ENCODE measurements at regions of chr6 and their contacts with region 1.

Region 1: DNA sequence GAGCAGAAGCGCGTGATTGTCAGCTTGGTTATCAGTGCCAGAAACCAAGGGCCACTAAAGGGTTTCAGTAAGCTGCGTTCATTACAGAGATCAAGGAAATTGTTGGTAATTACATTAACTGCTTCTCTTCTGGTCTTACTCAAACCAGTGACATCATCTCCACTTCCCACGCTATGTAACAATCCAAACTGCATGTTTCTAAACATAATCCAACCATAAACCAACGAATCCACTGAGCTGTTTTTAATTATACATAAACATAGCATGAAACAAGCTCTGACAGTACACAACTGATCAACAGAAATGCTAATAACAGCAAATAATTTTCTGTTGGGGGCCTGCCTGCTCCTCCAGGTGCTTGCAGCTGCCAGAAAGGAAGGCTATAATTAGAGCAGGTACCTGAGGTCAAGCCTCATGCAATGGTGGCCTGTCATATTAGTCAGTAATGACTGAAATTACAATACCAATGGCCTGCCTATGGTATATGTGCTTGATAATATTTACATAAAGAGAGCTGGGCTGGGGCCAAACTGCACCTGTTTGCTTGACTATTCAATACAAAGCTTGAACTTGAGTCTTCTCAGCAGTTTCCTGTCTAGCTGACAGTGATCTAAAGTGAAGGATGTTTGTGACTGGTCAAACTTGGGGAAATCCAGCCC is 40.1 kb downstream of the ILRUN start:
- DNase-seq: peak in 1 of 2 experiments; percentile 68
- H3K4me3 ChIP-seq: peak overlapping the region; percentile 54; the same call in 1 of the 2 replicates
- H3K27ac ChIP-seq: peak overlapping the region; percentile 96
- H3K4me1 ChIP-seq: peaks cover 54% of the 10 kb centered on the region
- H3K27me3 ChIP-seq: no peaks in the 10 kb centered on the region
- CTCF ChIP-seq: no peak

Region 2: GRCh38 chr6:34638834-34639736 is 17.4 kb before region 1 on chr6:
- CTCF ChIA-PET with region 1: no interaction called
- POLR2A ChIA-PET with region 1: interaction called, 10 read pairs
- intact Hi-C with region 1: no loop called
- DNase-seq: no peak
- H3K4me3 ChIP-seq: no peak overlapping the region
- H3K27ac ChIP-seq: no peak overlapping the region
- H3K4me1 ChIP-seq: no peaks in the 10 kb centered on the region
- H3K27me3 ChIP-seq: no peaks in the 10 kb centered on the region
- CTCF ChIP-seq: no peak

Region 3: DNA sequence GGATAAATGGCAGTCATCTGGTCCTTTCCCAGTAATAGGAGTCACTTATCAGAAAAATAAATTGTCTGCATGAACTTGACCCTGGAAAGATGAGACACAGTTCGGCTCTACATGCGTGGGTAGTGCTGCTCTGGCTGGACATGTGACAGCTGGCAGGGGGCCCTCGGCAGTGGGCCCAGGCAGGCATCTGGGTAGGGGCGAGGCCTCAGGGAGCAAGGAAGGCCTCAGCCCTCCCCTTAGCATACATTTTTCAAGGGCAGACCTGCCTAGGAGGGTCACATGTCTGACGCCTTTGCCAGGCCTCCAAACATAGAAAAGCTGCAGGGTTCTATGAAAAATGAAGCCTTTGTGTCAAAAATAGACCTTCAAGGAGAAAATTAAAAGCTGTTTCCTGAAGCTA is 52.9 kb after region 1 on chr6:
- CTCF ChIA-PET with region 1: no interaction called
- POLR2A ChIA-PET with region 1: no interaction called
- intact Hi-C with region 1: loop called (anchors 2 kb)
- DNase-seq: no peak
- H3K4me3 ChIP-seq: no peak overlapping the region
- H3K27ac ChIP-seq: no peak overlapping the region
- H3K4me1 ChIP-seq: peaks cover 5% of the 10 kb centered on the region; the same call in 1 of the 2 replicates
- H3K27me3 ChIP-seq: no peaks in the 10 kb centered on the region
- CTCF ChIP-seq: no peak

Region 4: DNA sequence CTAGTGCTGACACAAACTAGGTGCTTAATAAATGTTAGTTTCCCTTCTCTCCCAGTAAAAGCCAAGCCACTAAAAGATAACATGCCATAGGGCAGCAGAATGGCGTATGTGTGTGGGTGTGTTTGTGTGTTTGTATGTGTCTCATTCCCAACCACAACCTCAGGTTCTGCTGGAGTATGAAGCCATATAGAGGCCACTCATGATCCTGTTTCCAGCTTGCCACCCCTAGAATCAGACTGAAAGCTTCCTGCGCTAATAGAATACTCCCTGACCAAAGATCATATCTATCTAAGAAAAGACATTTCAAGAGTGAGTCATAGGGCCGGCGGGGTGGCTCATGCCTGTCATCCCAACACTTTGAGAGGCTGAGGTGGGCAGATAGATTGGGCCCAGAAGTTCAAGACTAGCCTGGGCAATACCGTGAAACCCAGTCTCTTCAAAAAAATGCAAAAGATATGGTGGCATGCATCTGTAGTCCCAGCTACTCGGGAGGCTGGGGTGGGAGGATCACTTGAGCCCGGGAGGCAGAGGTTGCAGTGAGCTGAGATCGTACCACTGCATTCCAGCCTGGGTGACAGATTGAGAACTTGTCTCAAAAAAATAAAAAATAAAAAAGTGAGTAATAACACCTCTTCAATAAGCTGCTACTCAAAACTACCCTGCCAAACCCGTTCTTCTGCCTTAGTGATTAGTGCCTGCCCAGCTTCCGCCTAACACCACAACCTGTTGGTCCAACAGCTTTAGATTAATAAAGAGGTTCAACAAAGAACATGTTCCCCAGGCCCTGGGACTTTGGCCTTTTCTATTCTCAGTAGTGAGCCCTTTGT is 89.0 kb after region 1 on chr6:
- CTCF ChIA-PET with region 1: no interaction called
- POLR2A ChIA-PET with region 1: interaction called, 4 read pairs
- intact Hi-C with region 1: loop called (anchors 1 kb)
- DNase-seq: peak; percentile 72 to 93
- H3K4me3 ChIP-seq: peak overlapping the region; percentile 32; the same call in 1 of the 2 replicates
- H3K27ac ChIP-seq: peak overlapping the region; percentile 80
- H3K4me1 ChIP-seq: peaks cover 35% of the 10 kb centered on the region
- H3K27me3 ChIP-seq: no peaks in the 10 kb centered on the region
- CTCF ChIP-seq: no peak

Measured in PC-9 (cell line).